Activated CD4-positive, alpha-beta T cell treated with anti-CD3 and anti-CD28 coated beads, Interleukin-2, amount 10 ng/mL, durations not matched to agents 24 days and 14 days (primary cell): ENCODE measurements at regions of chr15 and their contacts with region 1.

Region 1: DNA sequence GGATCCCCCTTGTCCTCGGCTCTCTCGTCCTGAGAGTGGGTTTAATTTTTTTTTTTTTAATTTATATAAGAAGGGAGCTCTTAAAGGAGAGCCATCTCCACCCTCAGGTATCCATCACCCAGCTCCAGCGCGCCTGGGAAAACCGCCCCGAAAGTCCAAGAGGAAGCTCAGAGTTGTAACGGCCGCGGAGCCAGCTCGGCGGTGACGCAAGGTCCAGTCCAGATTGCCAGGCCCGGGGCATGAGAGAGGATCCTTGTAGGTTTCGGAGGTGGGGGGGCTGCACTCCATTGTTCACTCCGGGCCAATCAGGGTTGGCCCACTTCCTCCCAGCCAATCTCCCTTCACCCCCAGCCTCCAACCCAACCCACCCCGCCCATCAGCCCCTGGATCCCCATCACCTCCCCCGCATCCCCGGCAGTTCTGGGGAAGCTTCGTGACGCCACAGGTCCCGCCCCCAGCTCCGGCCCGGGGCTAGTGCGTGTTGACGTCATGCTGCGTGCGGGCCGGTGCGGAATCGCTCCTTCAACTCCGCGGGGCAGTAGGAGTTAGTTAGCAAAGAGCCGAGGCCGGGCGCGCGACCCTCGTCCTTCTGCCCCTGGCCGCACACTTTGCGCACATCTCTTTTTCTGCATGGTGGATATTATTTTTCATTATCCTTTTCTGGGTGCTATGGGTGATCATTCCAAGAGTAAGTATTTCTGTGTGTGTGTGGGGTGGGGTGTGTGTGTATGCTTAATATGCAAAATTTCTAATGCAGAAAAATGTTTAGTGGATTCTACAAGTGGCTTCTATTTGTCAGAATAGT is at the start of gene ISL2:
- DNase-seq: peak; percentile 93
- H3K4me3 Mint-ChIP-seq: peak within 1 kb of the TSS; percentile 78
- H3K27ac Mint-ChIP-seq: peak within 1 kb of the TSS; percentile 81
- H3K4me1 Mint-ChIP-seq: peaks cover 41% of the 10 kb centered on the region
- H3K27me3 Mint-ChIP-seq: peaks cover 62% of the 10 kb centered on the region
- total RNA-seq, gene ISL2: 0.31 and 0.89 TPM in 2 replicates

Region 2: GRCh38 chr15:76057332-76058000 is 279.0 kb before region 1 on chr15:
- intact Hi-C with region 1: loop called (anchors 5 kb)
- DNase-seq: peak; percentile 82
- H3K4me3 Mint-ChIP-seq: no peak overlapping the region
- H3K27ac Mint-ChIP-seq: no peak overlapping the region
- H3K4me1 Mint-ChIP-seq: peaks cover 11% of the 10 kb centered on the region
- H3K27me3 Mint-ChIP-seq: peaks cover 55% of the 10 kb centered on the region

Region 3: GRCh38 chr15:76190834-76191538 is 145.5 kb before region 1 on chr15:
- intact Hi-C with region 1: loop called (anchors 2 kb)
- DNase-seq: peak; percentile 92
- H3K4me3 Mint-ChIP-seq: peak overlapping the region; percentile 20
- H3K27ac Mint-ChIP-seq: no peak overlapping the region
- H3K4me1 Mint-ChIP-seq: peaks cover 8% of the 10 kb centered on the region
- H3K27me3 Mint-ChIP-seq: peaks cover 36% of the 10 kb centered on the region

Region 4: DNA sequence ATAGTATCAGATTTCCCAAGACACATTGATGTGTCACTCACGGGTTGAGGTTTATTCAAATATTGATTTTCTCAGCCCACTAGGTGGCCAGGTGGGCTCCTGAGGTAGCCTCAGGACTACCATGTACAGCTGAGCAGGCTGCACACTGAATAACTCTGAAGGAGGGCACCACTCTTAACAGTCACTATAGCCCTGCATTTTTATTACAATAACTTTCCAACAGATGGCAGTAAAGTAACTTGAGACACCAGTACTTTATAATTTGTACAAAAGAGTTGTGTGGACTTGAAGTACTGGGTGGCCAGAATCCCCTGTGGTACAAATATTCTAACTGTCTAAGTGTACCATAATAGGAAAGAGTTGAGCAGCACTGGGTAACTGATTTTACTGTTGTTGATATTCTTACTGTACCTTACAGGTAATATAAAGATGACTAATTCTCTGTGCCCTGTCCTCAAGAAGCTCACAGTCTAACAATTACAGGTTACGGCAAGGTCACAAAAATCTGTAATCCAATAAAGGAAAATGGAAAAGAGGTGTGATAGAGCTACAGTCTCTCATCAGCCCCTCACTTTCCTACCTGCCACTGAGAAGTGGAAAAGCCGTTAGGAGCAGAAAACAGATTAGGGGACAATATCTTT is 101.2 kb before region 1 on chr15:
- intact Hi-C with region 1: loop called (anchors 2 kb)
- DNase-seq: no peak
- H3K4me3 Mint-ChIP-seq: no peak overlapping the region
- H3K27ac Mint-ChIP-seq: no peak overlapping the region
- H3K4me1 Mint-ChIP-seq: no peaks in the 10 kb centered on the region
- H3K27me3 Mint-ChIP-seq: no peaks in the 10 kb centered on the region

Region 5: DNA sequence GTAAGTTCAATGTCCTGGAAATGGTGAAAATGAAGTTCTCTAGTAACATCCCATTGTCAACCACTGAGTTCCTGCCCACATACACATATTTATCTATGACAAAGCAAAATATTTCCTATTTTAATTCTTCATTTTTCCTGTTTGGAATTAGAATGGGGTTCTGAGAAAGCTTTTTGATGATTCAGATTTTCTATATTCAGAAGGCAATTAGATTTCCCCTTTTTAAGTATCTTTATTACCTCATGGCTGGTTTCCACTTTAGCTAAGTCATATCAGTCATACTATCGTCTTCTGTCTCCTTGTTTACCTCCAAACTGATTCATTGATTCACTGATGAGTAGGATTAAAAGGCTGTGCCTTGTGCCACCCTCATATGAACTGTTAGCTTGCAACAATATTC is 43.1 kb before region 1 on chr15:
- intact Hi-C with region 1: loop called (anchors 2 kb)
- DNase-seq: no peak
- H3K4me3 Mint-ChIP-seq: no peak overlapping the region
- H3K27ac Mint-ChIP-seq: peak overlapping the region; percentile 35
- H3K4me1 Mint-ChIP-seq: peaks cover 11% of the 10 kb centered on the region
- H3K27me3 Mint-ChIP-seq: no peaks in the 10 kb centered on the region

Region 6: DNA sequence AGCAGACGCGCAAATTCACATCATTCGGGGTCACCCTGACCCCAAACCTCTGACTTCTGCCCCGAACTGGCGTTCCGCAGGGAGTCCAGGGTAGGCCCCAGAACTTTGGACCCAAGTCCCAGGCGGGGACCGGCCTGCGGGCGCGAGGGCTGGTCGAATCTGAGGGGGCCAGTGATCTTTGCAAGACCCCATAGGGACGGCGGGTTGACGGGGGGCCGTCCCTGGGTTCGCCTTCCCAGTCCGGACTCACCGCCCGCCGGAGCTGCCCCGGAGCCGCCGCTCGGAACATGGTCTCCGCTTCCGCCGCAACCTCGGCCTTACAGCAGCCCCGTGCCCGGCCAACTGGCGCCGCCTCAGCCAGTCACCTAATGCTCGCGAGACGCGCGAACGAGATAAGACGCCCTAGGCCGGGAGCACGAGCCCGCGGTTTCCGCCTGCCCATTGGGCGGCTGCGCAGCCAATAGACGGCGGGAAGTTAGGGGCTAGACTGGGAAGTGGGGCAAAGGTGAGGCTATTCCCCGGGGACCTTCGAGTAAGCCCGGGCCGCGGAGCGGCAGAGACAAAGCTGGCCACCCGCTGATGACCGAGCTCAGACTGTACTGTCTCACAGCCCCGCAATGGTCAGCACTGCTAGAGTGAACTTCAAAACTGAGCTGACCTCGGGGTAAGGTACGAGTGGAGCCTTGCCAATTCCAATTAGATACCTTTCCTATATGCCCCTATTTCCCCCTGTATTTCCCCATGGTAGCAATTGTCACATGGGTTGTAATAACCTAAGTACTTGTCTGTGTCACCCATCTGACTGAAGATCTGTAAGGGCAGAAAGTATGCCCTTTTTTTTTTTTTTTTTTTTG is 25.1 kb before region 1 on chr15 and contains the start of gene ETFA:
- intact Hi-C with region 1: loop called (anchors 2 kb)
- DNase-seq: peak; percentile 97
- H3K4me3 Mint-ChIP-seq: peak within 1 kb of the TSS; percentile 90
- H3K27ac Mint-ChIP-seq: peak within 1 kb of the TSS; percentile 86
- H3K4me1 Mint-ChIP-seq: peaks cover 22% of the 10 kb centered on the region
- H3K27me3 Mint-ChIP-seq: peaks cover 2% of the 10 kb centered on the region
- total RNA-seq, gene ETFA: 144 and 146 TPM in 2 replicates